MCF 10A (cell line): ENCODE measurements at regions of chr6 and their contacts with region 1.

Region 1: GRCh38 chr6:1596088-1596852 is 13.4 kb upstream of the FOXC1 start:
- DNase-seq: peak; percentile 55
- H3K4me3 Mint-ChIP-seq: no peak overlapping the region
- H3K27ac Mint-ChIP-seq: no peak overlapping the region
- H3K4me1 Mint-ChIP-seq: peaks cover 28% of the 10 kb centered on the region
- H3K27me3 Mint-ChIP-seq: peaks cover 21% of the 10 kb centered on the region
- CTCF ChIP-seq: peak; percentile 93

Region 2: GRCh38 chr6:1170794-1171193 is 425.5 kb before region 1 on chr6:
- CTCF ChIA-PET with region 1: no interaction called
- POLR2A ChIA-PET with region 1: no interaction called
- intact Hi-C with region 1: no loop called
- DNase-seq: no peak
- H3K4me3 Mint-ChIP-seq: no peak overlapping the region
- H3K27ac Mint-ChIP-seq: no peak overlapping the region
- H3K4me1 Mint-ChIP-seq: peaks cover 4% of the 10 kb centered on the region
- H3K27me3 Mint-ChIP-seq: no peaks in the 10 kb centered on the region
- CTCF ChIP-seq: no peak

Region 3: DNA sequence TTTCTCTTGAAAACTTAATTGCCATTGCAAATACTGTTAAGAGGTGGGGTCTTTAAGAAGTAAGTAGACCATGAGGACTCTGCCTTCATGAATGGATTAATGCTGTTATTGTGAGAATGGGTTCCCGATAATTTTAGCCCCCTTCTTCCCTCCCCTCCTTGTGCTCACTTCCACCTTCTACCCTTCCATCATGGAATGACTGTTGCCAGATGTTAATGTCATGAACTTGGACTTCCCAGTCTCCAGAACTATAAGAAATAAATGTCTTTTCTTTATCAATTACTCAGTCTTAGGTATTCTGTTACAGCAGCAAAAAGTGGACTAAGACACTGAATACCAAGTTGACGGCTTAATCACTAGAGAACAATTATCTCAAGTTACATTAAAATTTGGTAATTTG is 290.1 kb before region 1 on chr6:
- CTCF ChIA-PET with region 1: no interaction called
- POLR2A ChIA-PET with region 1: no interaction called
- intact Hi-C with region 1: no loop called
- DNase-seq: no peak
- H3K4me3 Mint-ChIP-seq: no peak overlapping the region
- H3K27ac Mint-ChIP-seq: no peak overlapping the region
- H3K4me1 Mint-ChIP-seq: peaks cover 4% of the 10 kb centered on the region
- H3K27me3 Mint-ChIP-seq: no peaks in the 10 kb centered on the region
- CTCF ChIP-seq: no peak

Region 4: DNA sequence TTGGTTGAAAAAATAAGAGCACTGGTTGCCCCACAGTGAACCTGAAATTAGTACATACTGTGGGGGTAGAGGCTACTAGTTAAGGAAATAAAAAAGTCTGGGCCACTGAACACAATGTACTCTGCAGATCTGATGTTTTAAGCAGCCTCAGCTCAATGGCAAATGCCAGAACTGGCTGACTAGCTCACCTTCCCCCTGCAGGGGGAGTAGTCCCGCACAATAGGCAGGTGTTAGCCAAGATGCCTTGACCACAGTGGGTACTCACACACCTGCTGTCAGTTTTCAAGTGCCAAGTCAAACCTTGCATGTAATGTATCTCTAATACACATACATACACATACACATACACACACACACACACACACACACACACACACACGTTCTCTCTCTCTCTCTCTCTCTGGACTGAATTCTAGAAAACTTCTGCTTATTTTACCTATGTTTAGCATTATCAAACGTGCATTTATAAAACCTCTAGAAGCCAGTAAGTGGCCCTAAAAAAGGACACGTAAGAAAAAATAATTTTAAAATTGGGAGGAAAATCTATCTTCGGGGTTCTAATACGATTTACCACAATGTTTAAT is 613.0 kb after region 1 on chr6:
- CTCF ChIA-PET with region 1: interaction called, 20 read pairs
- POLR2A ChIA-PET with region 1: interaction called, 3 read pairs
- intact Hi-C with region 1: no loop called
- DNase-seq: peak; percentile 82
- H3K4me3 Mint-ChIP-seq: no peak overlapping the region
- H3K27ac Mint-ChIP-seq: no peak overlapping the region
- H3K4me1 Mint-ChIP-seq: no peaks in the 10 kb centered on the region
- H3K27me3 Mint-ChIP-seq: no peaks in the 10 kb centered on the region
- CTCF ChIP-seq: peak; percentile 62

Region 5: DNA sequence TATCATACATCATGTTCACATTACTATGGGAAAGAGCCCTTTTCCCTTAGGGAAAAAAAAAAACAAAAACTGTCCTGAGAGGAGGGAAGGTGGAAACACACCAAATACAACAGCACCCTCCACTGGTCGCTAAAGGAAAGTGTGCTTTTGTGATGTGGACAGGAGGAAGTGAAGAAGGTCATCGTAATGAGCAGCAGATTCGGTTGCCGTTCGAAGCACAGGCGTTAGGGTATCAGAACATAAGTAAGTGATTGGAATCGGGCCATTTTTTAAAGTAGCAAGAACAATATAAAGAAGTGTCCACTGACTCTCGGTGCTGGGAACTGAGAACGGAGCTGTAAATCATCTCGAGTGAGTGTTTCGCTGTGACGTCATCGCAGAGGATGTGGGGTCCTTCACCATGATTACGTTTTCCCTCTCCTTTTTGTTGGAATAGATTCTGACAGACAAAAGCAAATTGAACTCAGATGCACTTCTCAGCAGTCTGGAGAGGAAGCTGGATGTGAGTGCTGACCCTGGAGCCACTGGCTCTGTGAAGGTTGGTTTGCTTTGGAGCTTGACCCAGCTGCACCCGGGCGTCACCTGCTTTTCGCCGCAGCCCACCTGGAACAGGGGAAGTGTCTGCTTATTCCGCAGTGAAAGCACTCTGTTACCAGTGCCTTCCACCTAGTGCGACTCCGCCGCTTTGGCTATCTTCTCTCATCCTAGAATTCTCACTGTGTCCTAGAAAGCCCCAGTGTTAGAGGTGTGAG is 852.7 kb after region 1 on chr6:
- CTCF ChIA-PET with region 1: interaction called, 4 read pairs
- POLR2A ChIA-PET with region 1: no interaction called
- intact Hi-C with region 1: loop called (anchors 2 kb)
- DNase-seq: peak; percentile 82
- H3K4me3 Mint-ChIP-seq: no peak overlapping the region
- H3K27ac Mint-ChIP-seq: no peak overlapping the region
- H3K4me1 Mint-ChIP-seq: peaks cover 6% of the 10 kb centered on the region
- H3K27me3 Mint-ChIP-seq: no peaks in the 10 kb centered on the region
- CTCF ChIP-seq: peak; percentile 67